ENCODE measurements at regions of chr2 and their contacts with region 1.

Region 1: DNA sequence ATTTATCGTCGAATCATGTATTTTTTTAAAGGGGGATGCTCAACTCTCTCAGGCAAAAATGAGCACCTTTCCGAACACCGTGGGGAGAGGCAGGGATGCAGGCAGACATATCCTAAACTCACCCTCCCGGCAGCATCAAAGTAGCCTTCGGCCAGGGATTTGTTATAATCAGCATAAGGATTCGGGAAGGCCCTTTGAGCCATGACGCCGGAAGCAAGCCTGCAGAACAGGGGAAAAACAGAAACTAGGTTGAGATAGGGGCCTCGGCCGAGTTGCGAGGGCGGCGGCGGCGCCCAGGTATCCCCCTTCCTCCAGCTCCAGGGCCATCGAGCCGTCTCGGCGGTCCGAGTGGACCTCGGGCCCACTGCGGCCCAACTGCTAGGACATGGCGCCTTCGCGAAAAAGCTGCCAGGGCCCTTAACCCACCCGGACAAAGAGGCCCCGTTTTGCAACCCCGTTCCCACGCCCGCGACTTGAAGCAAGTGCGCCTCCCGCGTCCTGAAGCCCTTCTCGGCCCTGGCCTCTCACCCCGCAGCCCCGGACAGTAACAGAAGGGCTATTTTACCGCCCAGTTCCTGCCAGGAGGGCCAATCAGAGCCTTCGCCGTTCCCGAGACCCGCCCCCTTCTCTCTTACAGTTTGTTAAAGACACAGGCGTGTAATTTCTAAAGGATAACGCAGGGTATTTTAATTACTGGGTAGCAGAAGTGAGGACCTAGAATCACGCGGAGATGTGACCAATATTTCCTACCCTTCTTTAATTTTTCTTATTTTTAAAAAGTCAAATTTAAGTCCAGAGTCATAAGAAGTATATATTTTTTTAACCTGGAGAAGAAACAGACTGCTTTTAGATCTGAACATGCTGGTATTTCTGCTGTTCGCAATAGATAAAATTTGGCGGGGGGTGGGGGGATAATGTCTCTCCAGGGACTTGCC is at the start of gene LANCL1:
- DNase-seq: peak; percentile 90
- H3K4me3 ChIP-seq: peak within 1 kb of the TSS; percentile 85
- H3K27ac ChIP-seq: peak within 1 kb of the TSS; percentile 48
- H3K4me1 ChIP-seq: peaks cover 20% of the 10 kb centered on the region
- CTCF ChIP-seq: no peak; the same call in 1 of the 2 replicates
- total RNA-seq, gene LANCL1: 20.4 and 22.5 TPM in 2 replicates

Region 2: DNA sequence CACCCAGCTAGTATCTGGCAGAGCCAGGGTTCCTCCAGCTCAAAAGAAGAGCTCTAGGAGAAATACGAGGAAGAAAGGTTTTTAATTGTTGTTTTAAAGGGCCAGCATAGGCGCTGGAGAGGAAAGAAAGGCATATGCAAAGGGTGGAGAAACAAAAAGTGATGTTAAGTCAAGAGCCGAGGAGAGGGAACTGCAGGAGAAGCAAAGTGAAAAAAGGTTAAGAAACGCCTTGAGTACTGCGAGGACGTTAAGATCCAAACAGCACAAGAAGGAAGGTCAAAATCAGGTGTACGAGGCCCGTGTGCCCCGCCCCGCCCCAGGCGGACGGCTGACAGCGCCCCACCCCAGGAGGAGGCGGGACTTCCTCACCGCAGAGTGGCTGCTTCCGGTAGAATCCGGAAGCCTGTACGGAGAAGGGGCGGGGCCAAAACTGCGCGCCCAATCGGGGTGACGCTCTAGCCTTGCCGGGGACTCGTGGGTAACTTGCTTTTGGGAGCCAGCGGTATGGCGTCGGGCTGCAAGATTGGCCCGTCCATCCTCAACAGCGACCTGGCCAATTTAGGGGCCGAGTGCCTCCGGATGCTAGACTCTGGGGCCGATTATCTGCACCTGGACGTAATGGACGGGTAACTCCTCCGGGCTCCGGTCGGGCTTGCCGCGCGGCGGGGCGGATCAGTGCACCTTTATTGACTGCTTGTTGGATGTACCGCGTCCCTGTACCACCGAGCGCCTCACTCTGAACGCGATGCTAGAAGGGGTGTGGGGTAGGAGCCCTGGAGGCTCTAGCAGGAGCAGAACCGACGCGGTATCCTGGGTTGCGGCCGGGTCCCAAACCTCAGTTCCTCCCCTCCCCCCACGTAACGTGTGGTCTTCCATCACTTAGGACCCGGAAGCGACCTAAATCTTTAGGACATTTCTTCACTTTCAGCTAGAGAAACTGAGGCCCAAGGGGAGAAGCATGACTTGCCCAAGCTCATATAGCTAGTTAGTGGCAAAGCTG is 474.0 kb before region 1 on chr2 and contains the start of gene RPE:
- CTCF ChIA-PET with region 1: no interaction called
- POLR2A ChIA-PET with region 1: no interaction called
- intact Hi-C with region 1: loop called (anchors 5 kb)
- DNase-seq: peak; percentile 97
- H3K4me3 ChIP-seq: peak within 1 kb of the TSS; percentile 89
- H3K27ac ChIP-seq: peak within 1 kb of the TSS; percentile 58
- H3K4me1 ChIP-seq: peaks cover 38% of the 10 kb centered on the region
- CTCF ChIP-seq: no peak
- total RNA-seq, gene RPE: 63.5 and 75.1 TPM in 2 replicates

Region 3: DNA sequence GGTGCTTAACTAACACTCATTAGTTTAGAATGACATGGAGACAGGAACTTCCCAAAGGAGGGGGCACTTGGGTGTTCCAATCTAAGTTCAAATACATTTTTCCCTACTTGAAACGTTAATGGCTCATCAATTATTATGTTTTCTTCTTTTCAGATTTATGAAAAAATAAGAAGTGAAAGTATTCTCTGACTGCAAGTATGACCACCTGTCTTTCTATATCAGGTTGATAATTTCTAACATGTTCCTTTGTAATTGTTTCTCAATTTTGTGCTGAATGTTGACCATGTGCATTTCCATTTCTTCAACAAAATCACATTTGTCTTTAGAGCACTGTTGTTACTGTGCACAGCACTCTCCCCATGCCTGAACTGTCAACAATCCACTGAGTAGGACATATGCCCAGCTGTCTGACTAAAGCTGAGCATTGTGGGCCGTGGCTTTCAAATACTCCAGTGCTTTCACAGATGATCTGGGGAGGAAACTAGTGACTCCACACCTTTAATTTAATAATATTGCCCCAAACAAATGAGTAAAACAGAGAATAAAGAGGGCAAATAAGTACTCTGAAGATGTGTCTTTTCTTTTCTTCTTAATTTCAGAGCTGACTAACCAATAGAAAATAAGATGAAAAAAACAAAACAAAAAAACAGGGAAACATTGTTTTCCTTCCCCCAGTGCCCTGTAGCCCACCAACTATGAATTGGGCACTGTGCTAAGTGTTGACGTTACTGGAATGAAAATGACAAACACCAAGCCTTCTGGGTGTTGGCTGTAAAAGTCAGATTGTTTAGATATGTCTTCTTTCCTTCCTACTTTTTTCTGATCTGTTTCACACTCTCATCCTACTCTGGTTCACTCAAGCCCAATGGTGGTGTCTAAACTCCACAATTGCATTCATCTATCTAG is 15.9 kb before region 1 on chr2:
- CTCF ChIA-PET with region 1: no interaction called
- POLR2A ChIA-PET with region 1: interaction called, 23 read pairs
- intact Hi-C with region 1: loop called (anchors 1 kb)
- DNase-seq: peak; percentile 45
- H3K4me3 ChIP-seq: peak overlapping the region; percentile 37
- H3K27ac ChIP-seq: peak overlapping the region; percentile 74
- H3K4me1 ChIP-seq: peaks cover 52% of the 10 kb centered on the region
- CTCF ChIP-seq: no peak

Region 4: DNA sequence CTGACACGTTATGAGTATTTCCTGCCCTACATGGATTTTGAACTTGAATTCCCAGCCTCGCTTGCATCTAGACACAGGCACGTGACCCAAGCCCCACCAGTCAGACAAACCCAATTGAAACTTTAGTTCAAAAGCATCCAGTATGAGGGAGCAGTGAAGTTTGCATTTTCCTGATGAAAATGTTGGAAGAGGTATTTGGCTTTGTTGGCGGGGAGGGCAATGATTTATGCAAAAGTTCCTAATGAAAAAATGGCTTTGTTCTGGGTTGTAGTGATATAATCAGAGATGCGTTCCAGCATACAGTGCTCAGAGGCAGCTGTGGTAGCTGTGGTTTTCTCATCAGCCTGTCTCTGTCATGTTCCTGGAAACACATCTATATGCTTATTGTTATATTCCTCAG is 43.1 kb after region 1 on chr2:
- CTCF ChIA-PET with region 1: no interaction called
- POLR2A ChIA-PET with region 1: no interaction called
- intact Hi-C with region 1: no loop called
- DNase-seq: no peak
- H3K4me3 ChIP-seq: no peak overlapping the region
- H3K27ac ChIP-seq: no peak overlapping the region
- H3K4me1 ChIP-seq: no peaks in the 10 kb centered on the region
- CTCF ChIP-seq: no peak